OCI-LY7 (cell line): ENCODE measurements at regions of chr1 and their contacts with region 1.

Region 1: GRCh38 chr1:98384461-98385141 is 276.9 kb upstream of the SNX7 start:
- DNase-seq: no peak
- H3K4me3 ChIP-seq: no peak overlapping the region
- H3K27ac ChIP-seq: no peak overlapping the region
- H3K4me1 ChIP-seq: no peaks in the 10 kb centered on the region
- CTCF ChIP-seq: no peak

Region 2: DNA sequence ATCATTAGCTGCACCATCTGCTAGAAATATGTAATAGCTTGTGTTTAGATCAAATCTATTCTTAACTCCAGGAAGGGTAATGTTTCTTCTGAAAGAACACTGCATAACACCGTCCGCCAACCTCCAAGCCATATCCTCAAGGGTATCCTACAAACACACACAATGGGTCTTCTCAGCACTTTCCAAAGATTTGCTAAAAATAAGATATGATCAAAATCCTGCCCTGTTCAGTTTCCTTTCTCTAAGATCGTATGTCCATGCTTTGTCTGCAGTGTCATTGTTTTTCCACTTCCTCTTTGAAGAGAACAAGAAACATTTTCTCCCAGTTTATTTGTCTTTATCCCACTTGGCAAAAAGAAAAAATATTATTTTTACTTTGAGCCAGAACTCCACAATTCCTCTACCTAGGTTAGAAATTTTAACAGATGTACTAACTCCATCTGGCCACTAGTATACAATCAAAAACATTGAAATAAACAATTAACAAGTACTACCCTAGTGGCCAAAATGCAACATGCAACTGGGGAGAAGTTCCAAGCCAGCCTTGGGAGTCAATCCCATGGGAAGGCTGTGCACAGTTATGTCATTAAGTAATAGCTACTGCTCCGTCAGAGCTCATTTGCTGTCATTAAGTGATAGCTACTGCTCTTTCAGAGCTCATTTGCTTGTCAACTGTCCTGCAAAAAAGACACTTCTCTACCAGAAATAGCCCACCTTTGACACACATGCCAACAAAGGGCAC is 1344.1 kb after region 1 on chr1:
- CTCF ChIA-PET with region 1: no interaction called
- POLR2A ChIA-PET with region 1: interaction called, 19 read pairs
- intact Hi-C with region 1: no loop called
- DNase-seq: peak; percentile 22
- H3K4me3 ChIP-seq: no peak overlapping the region
- H3K27ac ChIP-seq: no peak overlapping the region
- H3K4me1 ChIP-seq: no peaks in the 10 kb centered on the region
- CTCF ChIP-seq: peak; percentile 80